ENCODE measurements at regions of chr13 and their contacts with region 1.

Region 1: GRCh38 chr13:79538757-79539156 is 57.8 kb downstream of the NDFIP2 start:
- DNase-seq: no peak
- ATAC-seq: no peak

Region 2: DNA sequence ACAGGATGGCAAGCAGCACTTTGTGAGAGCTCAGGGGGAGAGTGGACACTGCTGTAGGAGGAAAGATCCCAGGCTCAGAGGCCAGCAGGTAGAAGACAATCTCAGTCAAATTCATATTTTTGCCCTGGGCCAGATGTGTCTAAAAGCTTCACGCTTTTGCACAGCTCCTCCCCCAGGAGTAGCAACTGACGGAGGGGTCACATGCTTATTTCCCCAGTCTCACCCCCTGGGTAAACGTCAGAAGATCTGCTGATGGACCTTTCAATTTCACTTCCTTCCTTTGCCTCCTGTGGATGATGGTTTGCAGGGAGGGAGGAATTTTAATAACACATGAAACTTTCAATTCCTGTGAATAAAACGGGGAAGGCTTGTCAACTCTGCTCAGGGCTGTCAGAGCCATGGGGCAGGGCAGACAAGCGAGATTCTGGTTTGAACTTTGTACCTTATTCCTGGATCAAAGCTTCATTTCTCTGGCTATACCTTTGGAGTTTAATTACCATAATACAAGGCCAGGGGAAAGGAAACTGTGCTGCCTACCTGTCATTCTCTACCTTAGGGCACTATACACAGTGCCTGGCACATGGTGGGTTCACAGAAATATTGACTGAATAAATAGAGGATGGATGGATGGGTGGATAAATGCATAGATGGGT is 976.4 kb before region 1 on chr13:
- intact Hi-C with region 1: no loop called
- DNase-seq: no peak
- ATAC-seq: no peak

Region 3: DNA sequence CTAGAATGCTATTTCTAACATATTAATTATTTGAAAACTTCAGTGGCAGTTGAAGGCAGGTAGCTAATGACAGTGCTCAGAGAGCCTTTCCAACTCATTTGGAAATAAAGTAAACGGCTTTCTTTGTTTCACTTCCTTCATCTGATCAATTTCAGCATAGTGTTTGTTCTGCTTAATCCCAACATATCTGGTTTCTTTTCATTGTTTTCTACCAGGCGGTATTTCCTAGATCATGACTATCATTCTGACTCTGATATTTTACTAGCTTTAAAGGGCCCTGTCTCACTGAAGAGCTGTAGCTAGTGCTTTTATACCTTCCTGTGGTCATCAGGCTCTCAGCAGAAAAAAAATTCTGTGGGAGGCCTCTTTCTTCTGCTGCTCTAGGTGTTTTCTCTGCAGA is 311.3 kb before region 1 on chr13:
- intact Hi-C with region 1: no loop called
- DNase-seq: no peak
- ATAC-seq: no peak

Region 4: DNA sequence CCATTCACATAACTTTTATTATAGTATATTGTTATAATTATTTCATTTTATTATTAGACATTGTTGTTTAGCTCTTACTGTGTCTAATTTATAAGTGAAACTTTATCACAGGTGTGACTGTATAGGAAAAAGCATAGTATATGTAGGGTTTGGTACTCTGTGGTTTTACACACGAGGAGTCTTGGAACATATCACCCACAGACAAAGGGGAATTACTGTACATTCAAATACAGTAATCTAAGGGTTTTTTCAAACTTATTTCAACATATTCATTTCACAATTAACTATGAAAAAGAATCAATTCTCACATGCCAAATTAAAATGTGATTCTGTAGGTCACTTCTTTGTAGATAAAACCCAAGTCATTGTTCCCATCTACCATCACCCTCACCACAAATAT is 178.7 kb before region 1 on chr13:
- intact Hi-C with region 1: no loop called
- DNase-seq: no peak
- ATAC-seq: no peak

Region 5: GRCh38 chr13:79423801-79424642 is 114.7 kb before region 1 on chr13:
- intact Hi-C with region 1: loop called (anchors 5 kb)
- DNase-seq: no peak
- ATAC-seq: no peak

Region 6: DNA sequence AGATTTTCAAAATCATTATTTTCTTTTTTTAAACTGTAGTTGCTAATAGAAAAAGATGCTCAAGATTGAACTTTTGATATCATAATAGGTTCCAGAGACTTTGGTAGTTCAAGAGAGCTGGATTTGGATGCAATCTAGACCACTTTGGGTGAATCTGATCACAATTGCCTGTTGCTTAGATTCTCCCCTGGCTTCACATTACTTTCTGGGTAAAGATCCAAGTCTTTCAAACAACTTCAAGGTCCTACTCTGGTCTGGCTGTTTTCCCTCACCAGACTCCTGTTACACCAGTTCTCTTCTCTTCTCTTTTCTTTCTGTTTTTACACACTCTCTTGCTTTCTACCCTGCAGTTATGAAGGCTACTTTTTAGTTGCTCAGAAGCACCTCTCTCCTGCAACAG is 809.6 kb after region 1 on chr13:
- intact Hi-C with region 1: no loop called
- DNase-seq: no peak
- ATAC-seq: peak; percentile 51